Activated CD4-positive, alpha-beta T cell treated with anti-CD3 and anti-CD28 coated beads for 36 hours (primary cell): ENCODE measurements at regions of chr17 and their contacts with region 1.

Region 1: DNA sequence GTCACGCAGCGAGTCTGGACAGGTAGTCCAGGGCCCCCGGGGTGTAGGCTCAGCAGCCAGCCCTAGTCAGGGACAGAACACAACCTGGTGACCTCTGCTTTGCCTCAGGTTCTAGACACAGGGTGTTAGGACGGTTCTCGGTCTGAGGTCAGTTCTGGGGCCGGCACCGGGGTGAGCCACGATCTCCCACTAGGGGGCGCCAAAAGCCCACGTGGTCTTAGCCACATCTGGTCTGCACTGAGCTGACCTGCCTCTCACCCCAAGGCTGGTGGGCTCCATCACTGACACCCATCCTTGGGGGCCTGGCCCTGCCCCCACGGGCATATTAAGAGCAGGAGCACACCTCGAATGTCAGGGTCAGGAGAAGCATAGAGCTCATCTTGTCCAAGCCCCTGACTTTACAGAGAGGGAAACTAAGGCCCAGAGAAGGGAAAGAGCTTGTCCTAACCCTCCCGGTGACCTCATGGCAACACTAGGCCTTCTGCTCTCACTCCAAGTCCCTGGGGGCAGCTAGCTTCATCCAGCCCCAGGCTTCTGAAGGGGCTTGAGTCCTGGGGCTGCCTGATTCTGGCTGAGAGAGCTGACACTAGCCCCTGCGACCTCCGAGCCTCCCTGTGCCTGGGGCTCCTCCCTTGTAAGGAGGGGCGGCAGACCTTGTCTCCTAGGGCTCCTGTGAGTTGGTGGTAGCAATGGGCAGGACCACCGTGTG is 9.0 kb downstream of the SLC5A10 start:
- DNase-seq: peak; percentile 91
- ATAC-seq: peak; percentile 93
- H3K4me3 Mint-ChIP-seq: no peak overlapping the region
- H3K27ac Mint-ChIP-seq: no peak overlapping the region
- H3K4me1 Mint-ChIP-seq: peaks cover 22% of the 10 kb centered on the region
- H3K27me3 Mint-ChIP-seq: no peaks in the 10 kb centered on the region

Region 2: GRCh38 chr17:18093616-18094408 is 867.1 kb before region 1 on chr17:
- CTCF ChIA-PET with region 1: no interaction called
- POLR2A ChIA-PET with region 1: no interaction called
- intact Hi-C with region 1: no loop called
- DNase-seq: peak; percentile 56
- ATAC-seq: peak; percentile 68
- H3K4me3 Mint-ChIP-seq: no peak overlapping the region
- H3K27ac Mint-ChIP-seq: no peak overlapping the region
- H3K4me1 Mint-ChIP-seq: peaks cover 14% of the 10 kb centered on the region
- H3K27me3 Mint-ChIP-seq: no peaks in the 10 kb centered on the region

Region 3: GRCh38 chr17:18129041-18129502 is 831.9 kb before region 1 on chr17:
- CTCF ChIA-PET with region 1: no interaction called
- POLR2A ChIA-PET with region 1: no interaction called
- intact Hi-C with region 1: no loop called
- DNase-seq: no peak
- ATAC-seq: peak; percentile 42
- H3K4me3 Mint-ChIP-seq: no peak overlapping the region
- H3K27ac Mint-ChIP-seq: no peak overlapping the region
- H3K4me1 Mint-ChIP-seq: no peaks in the 10 kb centered on the region
- H3K27me3 Mint-ChIP-seq: no peaks in the 10 kb centered on the region

Region 4: GRCh38 chr17:18937981-18938691 is 22.8 kb before region 1 on chr17:
- CTCF ChIA-PET with region 1: interaction called, 12 read pairs
- POLR2A ChIA-PET with region 1: no interaction called
- intact Hi-C with region 1: no loop called
- DNase-seq: no peak
- ATAC-seq: no peak
- H3K4me3 Mint-ChIP-seq: no peak overlapping the region
- H3K27ac Mint-ChIP-seq: no peak overlapping the region
- H3K4me1 Mint-ChIP-seq: peaks cover 9% of the 10 kb centered on the region
- H3K27me3 Mint-ChIP-seq: no peaks in the 10 kb centered on the region

Region 5: GRCh38 chr17:18974407-18975132 is 13.6 kb after region 1 on chr17:
- CTCF ChIA-PET with region 1: interaction called, 11 read pairs
- POLR2A ChIA-PET with region 1: no interaction called
- intact Hi-C with region 1: no loop called
- DNase-seq: peak; percentile 67
- ATAC-seq: peak; percentile 84
- H3K4me3 Mint-ChIP-seq: no peak overlapping the region
- H3K27ac Mint-ChIP-seq: no peak overlapping the region
- H3K4me1 Mint-ChIP-seq: peaks cover 16% of the 10 kb centered on the region
- H3K27me3 Mint-ChIP-seq: no peaks in the 10 kb centered on the region